Transverse colon (tissue), 4 donors: ENCODE measurements at regions of chr15 and their contacts with region 1.

Region 1: GRCh38 chr15:47987908-47988532 is 132.8 kb upstream of the SLC24A5 start:
- DNase-seq: no peak
- H3K4me3 ChIP-seq: no peak overlapping the region
- H3K27ac ChIP-seq: no peak overlapping the region
- H3K4me1 ChIP-seq: peaks cover 0 to 5% (median 0%) of the 10 kb centered on the region in 4 donors
- H3K27me3 ChIP-seq: no peaks in the 10 kb centered on the region
- CTCF ChIP-seq: peak; percentile 67 to 73 (median 68)
- EP300 ChIP-seq: no peak
- POLR2A ChIP-seq: no peak

Region 2: DNA sequence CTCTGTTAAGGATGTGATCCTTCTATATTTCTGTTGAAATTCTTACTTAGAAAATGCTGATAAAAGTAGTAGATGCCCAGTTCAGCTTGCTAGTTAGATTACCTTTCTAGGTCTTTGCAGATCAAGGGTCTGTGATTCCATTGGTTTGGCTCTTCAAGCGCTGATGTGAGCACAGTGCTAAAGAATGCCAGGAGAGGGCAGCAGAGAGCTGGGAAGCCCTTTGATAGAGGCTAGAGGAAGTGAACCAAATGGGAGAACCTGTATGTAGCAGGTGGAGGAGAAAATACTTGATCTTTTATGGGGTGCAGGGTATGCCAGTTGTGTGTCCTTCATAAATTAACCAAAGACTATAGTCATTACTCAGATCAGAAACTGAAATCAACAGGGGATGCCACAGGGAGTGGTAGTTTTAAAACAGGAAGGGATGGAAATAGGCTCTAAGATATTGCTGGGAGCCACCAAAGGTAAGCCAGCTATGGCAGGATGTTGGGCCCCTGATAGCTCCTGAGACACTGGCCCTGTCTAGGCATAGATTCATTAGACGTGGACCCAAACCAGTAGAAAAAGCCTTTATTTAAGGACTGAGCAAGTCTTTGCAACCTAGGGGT is 1675.8 kb before region 1 on chr15:
- in situ Hi-C with region 1: loop called in 1 of 4 experiments (anchors 25 kb)
- intact Hi-C with region 1: no loop called
- DNase-seq: peak; percentile 84
- H3K4me3 ChIP-seq: no peak overlapping the region
- H3K27ac ChIP-seq: no peak overlapping the region
- H3K4me1 ChIP-seq: no peaks in the 10 kb centered on the region
- H3K27me3 ChIP-seq: no peaks in the 10 kb centered on the region
- CTCF ChIP-seq: peak; percentile 80 to 86 (median 82)
- EP300 ChIP-seq: no peak
- POLR2A ChIP-seq: no peak

Region 3: DNA sequence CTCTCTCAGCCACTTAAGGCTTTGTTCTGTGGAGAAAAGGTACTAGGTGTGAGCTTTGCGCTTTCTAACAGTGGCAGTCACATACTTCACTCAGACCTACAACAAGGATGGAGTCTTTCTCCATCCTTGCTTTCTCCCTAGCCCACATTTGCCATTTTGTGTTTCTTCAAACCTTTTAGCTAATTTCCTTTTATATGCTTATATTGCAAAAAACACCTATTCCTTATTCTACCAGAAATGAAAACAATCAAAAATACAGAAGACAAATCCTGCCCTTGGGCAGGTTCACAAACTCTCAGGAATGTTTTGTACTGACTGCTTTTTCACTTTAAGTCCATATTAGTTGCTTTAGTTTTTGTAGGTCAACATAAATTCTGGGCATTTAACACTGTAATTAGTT is 1439.0 kb before region 1 on chr15:
- in situ Hi-C with region 1: no loop called
- intact Hi-C with region 1: loop called (anchors 5 kb)
- DNase-seq: no peak
- H3K4me3 ChIP-seq: no peak overlapping the region
- H3K27ac ChIP-seq: no peak overlapping the region
- H3K4me1 ChIP-seq: no peaks in the 10 kb centered on the region
- H3K27me3 ChIP-seq: no peaks in the 10 kb centered on the region
- CTCF ChIP-seq: no peak
- EP300 ChIP-seq: no peak
- POLR2A ChIP-seq: no peak

Region 4: GRCh38 chr15:47196057-47196456 is 792.0 kb before region 1 on chr15:
- in situ Hi-C with region 1: loop called (anchors 5 to 25 kb)
- intact Hi-C with region 1: loop called (anchors 5 kb)
- DNase-seq: peak; percentile 75
- H3K4me3 ChIP-seq: no peak overlapping the region
- H3K27ac ChIP-seq: no peak overlapping the region
- H3K4me1 ChIP-seq: peaks cover 0 to 3% (median 0%) of the 10 kb centered on the region in 4 donors
- H3K27me3 ChIP-seq: no peaks in the 10 kb centered on the region
- CTCF ChIP-seq: peak; percentile 68 to 80 (median 73)
- EP300 ChIP-seq: no peak
- POLR2A ChIP-seq: no peak

Region 5: DNA sequence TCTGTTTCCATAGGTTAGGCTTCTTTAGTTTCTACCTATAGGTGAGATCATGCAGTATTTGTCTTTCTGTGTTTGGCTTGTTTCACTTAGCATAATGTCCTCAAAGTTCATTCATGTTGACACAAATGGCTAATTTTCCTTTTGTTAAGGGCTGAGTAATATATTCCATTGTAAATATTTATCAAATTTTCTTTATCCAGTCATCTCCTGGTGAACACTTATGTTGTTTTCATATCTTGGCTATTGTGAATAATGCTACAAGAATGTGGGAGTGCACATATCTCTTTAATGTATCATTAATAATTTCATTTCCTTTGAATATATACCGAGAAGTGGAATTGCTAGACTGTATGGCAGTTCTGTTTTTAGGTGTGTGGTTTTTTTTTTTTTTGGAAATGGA is 521.7 kb before region 1 on chr15:
- in situ Hi-C with region 1: loop called in 2 of 4 experiments (anchors 10 kb)
- intact Hi-C with region 1: no loop called
- DNase-seq: no peak
- H3K4me3 ChIP-seq: no peak overlapping the region
- H3K27ac ChIP-seq: no peak overlapping the region
- H3K4me1 ChIP-seq: no peaks in the 10 kb centered on the region
- H3K27me3 ChIP-seq: no peaks in the 10 kb centered on the region
- CTCF ChIP-seq: no peak
- EP300 ChIP-seq: no peak
- POLR2A ChIP-seq: no peak

Region 6: GRCh38 chr15:47484059-47484458 is 504.0 kb before region 1 on chr15:
- in situ Hi-C with region 1: loop called in 1 of 4 experiments (anchors 25 kb)
- intact Hi-C with region 1: no loop called
- DNase-seq: no peak
- H3K4me3 ChIP-seq: no peak overlapping the region
- H3K27ac ChIP-seq: no peak overlapping the region
- H3K4me1 ChIP-seq: no peaks in the 10 kb centered on the region
- H3K27me3 ChIP-seq: no peaks in the 10 kb centered on the region
- CTCF ChIP-seq: no peak
- EP300 ChIP-seq: no peak
- POLR2A ChIP-seq: no peak

Region 7: DNA sequence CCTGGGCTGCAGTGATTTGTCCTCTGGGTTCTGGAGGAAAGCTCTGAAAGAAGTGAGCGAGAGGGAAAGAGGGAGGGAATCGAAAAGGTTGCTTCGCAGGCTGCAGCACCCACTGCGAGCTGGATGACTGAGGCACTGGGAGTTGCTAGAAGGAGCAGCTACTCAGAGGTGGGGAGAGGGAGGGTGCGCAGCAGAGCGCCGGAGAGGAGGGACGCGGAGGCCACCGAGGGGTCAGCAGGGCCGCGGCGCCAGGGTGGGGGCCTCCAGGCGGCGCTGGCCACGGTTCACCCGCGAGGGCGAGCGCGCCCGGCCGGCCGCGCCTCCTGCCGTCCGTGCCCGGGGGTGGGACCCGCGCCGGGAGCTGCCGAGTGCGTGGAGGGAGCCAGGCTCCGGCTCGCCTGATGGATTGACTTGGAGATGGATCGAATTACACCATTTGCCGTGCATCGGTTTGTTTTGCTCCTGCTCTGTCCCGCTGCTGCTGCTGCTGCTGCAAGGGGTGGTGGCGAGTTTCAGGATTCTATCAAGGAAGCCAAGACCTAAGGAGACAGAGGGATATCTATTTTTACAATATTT is 270.9 kb before region 1 on chr15 and contains the start of gene SEMA6D:
- in situ Hi-C with region 1: loop called in 1 of 4 experiments (anchors 25 kb)
- intact Hi-C with region 1: no loop called
- DNase-seq: peak; percentile 72
- H3K4me3 ChIP-seq: peak within 1 kb of the TSS; percentile 46 to 69 (median 62)
- H3K27ac ChIP-seq: peak within 1 kb of the TSS; percentile 82 to 88 (median 84)
- H3K4me1 ChIP-seq: peaks cover 0 to 34% (median 5%) of the 10 kb centered on the region in 4 donors
- H3K27me3 ChIP-seq: peaks cover 12% of the 10 kb centered on the region
- CTCF ChIP-seq: peak in 4 of 5 experiments; percentile 14 to 42 (median 35)
- EP300 ChIP-seq: no peak
- POLR2A ChIP-seq: no peak
- total RNA-seq, gene SEMA6D: 23.3 to 59.4 (median 42.7) TPM

Region 8: DNA sequence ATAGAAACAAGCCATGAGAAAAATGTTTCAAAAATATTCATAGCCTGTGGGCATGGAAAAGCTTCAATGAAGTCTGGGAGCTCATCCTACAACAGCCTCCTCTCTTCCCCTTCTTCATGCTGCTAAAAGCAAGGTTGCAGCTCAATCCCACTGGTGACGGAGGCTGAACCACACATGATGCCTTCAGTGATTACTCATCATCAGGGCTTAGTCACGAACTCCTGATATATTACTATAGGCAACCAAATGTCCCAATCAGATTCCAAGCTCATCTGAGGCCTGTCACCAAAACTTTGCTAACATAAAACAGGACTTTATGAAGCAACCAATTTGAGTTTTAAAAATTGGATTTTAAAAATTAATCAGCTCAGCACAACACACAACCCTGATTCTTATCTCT is 108.8 kb after region 1 on chr15:
- in situ Hi-C with region 1: no loop called
- intact Hi-C with region 1: no loop called
- DNase-seq: no peak
- H3K4me3 ChIP-seq: no peak overlapping the region
- H3K27ac ChIP-seq: no peak overlapping the region
- H3K4me1 ChIP-seq: peaks cover 0 to 3% (median 0%) of the 10 kb centered on the region in 4 donors
- H3K27me3 ChIP-seq: no peaks in the 10 kb centered on the region
- CTCF ChIP-seq: no peak
- EP300 ChIP-seq: no peak
- POLR2A ChIP-seq: no peak